Heart left ventricle (tissue), 16 donors: ENCODE measurements at regions of chr3 and their contacts with region 1.

Region 1: GRCh38 chr3:196969660-196970546 is 1.3 kb upstream of the PIGZ start:
- DNase-seq: peak; percentile 58 to 86 (median 63)
- ATAC-seq: peak in 3 of 4 donors; percentile 58 to 84 (median 78)
- H3K4me3 ChIP-seq: peak overlapping the region; percentile 66 to 97 (median 84)
- H3K27ac ChIP-seq: peak overlapping the region in 11 of 12 donors; percentile 65 to 85 (median 79)
- H3K4me1 ChIP-seq: peaks cover 0 to 27% (median 10%) of the 10 kb centered on the region in 12 donors
- H3K27me3 ChIP-seq: no peaks in the 10 kb centered on the region
- CTCF ChIP-seq: peak; percentile 37 to 98 (median 86)
- POLR2A ChIP-seq: peak in 1 of 2 donors; percentile 11

Region 2: GRCh38 chr3:196547067-196547466 is 422.8 kb before region 1 on chr3:
- intact Hi-C with region 1: loop called in 1 of 10 experiments (anchors 10 kb)
- DNase-seq: no peak
- ATAC-seq: no peak
- H3K4me3 ChIP-seq: no peak overlapping the region
- H3K27ac ChIP-seq: no peak overlapping the region
- H3K4me1 ChIP-seq: no peaks in the 10 kb centered on the region
- H3K27me3 ChIP-seq: no peaks in the 10 kb centered on the region
- CTCF ChIP-seq: peak in 1 of 12 donors; percentile 10
- POLR2A ChIP-seq: no peak

Region 3: GRCh38 chr3:196609343-196609775 is 360.5 kb before region 1 on chr3:
- intact Hi-C with region 1: loop called in 4 of 10 experiments (anchors 2 to 5 kb)
- DNase-seq: peak; percentile 86 to 95 (median 88)
- ATAC-seq: peak; percentile 77 to 95 (median 92)
- H3K4me3 ChIP-seq: peak overlapping the region in 1 of 12 donors; percentile 1
- H3K27ac ChIP-seq: peak overlapping the region in 7 of 12 donors; percentile 2 to 85 (median 44)
- H3K4me1 ChIP-seq: peaks cover 0 to 36% (median 18%) of the 10 kb centered on the region in 12 donors
- H3K27me3 ChIP-seq: peaks cover 0 to 2% (median 0%) of the 10 kb centered on the region in 9 donors
- CTCF ChIP-seq: peak; percentile 72 to 91 (median 82)
- POLR2A ChIP-seq: peak in 1 of 2 donors; percentile 13

Region 4: DNA sequence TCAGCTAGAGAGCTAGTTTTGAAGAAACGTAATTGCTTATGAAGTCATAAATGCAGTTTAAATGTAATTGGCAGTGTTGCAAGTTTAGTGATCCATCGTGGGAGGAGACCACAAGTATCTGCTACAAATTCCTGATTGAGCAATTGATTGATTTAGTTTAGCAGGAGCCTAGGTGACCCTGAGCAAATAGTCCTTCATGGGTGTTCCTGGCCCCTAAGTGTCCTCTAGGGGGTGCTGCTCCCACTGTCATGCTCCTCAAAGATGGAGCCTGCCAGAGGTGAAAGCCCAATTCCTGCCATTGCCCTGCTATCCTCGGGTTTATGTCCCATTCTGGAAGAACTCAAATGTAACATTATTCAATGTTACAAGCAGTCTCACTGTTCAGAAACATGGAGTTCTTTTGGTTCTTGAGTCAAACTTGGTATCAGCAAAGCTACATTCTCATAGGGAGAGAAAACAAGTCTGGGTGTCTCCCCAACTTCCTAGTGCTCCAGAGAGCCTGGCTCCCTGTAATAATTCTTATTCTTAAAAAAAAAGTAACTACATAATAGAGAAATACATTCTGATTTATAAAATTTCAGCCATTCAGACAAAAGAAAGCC is 132.0 kb before region 1 on chr3:
- intact Hi-C with region 1: loop called in 9 of 10 experiments (anchors 1 to 5 kb)
- DNase-seq: peak; percentile 51 to 64 (median 54)
- ATAC-seq: peak in 3 of 4 donors; percentile 76 to 80 (median 77)
- H3K4me3 ChIP-seq: no peak overlapping the region
- H3K27ac ChIP-seq: no peak overlapping the region
- H3K4me1 ChIP-seq: no peaks in the 10 kb centered on the region
- H3K27me3 ChIP-seq: no peaks in the 10 kb centered on the region
- CTCF ChIP-seq: peak; percentile 54 to 82 (median 69)
- POLR2A ChIP-seq: no peak

Region 5: DNA sequence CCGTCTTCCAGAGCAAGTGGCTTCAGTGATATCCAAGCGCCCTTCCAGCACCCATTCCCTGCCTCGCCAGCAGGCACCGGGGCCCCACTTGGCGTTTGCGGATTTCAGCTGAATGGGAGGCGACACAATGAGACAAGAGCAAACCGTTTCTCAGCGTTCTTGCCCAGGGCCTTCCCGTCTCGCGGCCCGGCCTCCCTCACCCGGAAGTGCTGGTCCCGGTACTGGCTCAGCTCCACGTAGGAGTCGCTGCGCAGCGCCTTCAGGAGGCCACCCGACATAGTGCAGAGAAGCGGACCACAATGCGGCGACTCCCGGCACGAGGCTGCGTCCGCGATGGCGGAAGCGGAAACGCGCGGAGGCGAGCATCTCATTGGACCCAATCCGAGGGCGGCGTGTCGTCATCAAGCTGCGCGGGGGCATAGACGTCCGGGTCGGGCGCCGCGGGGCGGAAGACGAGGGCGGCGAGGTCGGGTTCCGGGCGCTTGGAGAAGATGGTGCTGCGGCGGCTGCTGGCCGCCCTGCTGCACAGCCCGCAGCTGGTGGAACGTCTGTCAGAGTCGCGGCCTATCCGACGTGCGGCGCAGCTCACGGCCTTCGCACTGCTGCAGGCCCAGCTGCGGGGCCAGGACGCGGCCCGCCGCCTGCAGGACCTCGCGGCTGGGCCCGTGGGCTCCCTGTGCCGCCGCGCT is 27.5 kb before region 1 on chr3 and contains the start of gene NCBP2:
- intact Hi-C with region 1: loop called in 2 of 10 experiments (anchors 2 kb)
- DNase-seq: peak; percentile 99 to 100 (median 99)
- ATAC-seq: peak; percentile 96 to 98 (median 96)
- H3K4me3 ChIP-seq: peak within 1 kb of the TSS; percentile 70 to 100 (median 96)
- H3K27ac ChIP-seq: peak within 1 kb of the TSS; percentile 63 to 98 (median 91)
- H3K4me1 ChIP-seq: peaks cover 4 to 38% (median 22%) of the 10 kb centered on the region in 12 donors
- H3K27me3 ChIP-seq: no peaks in the 10 kb centered on the region
- CTCF ChIP-seq: peak; percentile 26 to 76 (median 60)
- POLR2A ChIP-seq: peak; percentile 52 to 83
- total RNA-seq, gene NCBP2: 20.7 to 43.8 (median 38.9) TPM

Region 6: GRCh38 chr3:197002701-197003454 is 33.0 kb after region 1 on chr3:
- intact Hi-C with region 1: no loop called
- DNase-seq: peak; percentile 73 to 90 (median 79)
- ATAC-seq: peak; percentile 28 to 92 (median 82)
- H3K4me3 ChIP-seq: peak overlapping the region; percentile 26 to 78 (median 67)
- H3K27ac ChIP-seq: peak overlapping the region in 11 of 12 donors; percentile 34 to 86 (median 71)
- H3K4me1 ChIP-seq: peaks cover 0 to 16% (median 8%) of the 10 kb centered on the region in 12 donors
- H3K27me3 ChIP-seq: no peaks in the 10 kb centered on the region
- CTCF ChIP-seq: peak; percentile 48 to 93 (median 79)
- POLR2A ChIP-seq: no peak

Region 7: GRCh38 chr3:197186887-197187588 is 217.1 kb after region 1 on chr3:
- intact Hi-C with region 1: loop called in 4 of 10 experiments (anchors 5 to 10 kb)
- DNase-seq: peak in 1 of 5 donors; percentile 13
- ATAC-seq: peak; percentile 58 to 75 (median 64)
- H3K4me3 ChIP-seq: no peak overlapping the region
- H3K27ac ChIP-seq: no peak overlapping the region
- H3K4me1 ChIP-seq: peaks cover 0 to 13% (median 3%) of the 10 kb centered on the region in 12 donors
- H3K27me3 ChIP-seq: no peaks in the 10 kb centered on the region
- CTCF ChIP-seq: peak; percentile 71 to 91 (median 82)
- POLR2A ChIP-seq: no peak